ENCODE measurements at regions of chr5 and their contacts with region 1.

Region 1: GRCh38 chr5:44035617-44036016 is 353.6 kb downstream of the FGF10 start:
- DNase-seq: no peak
- ATAC-seq: no peak
- H3K4me3 ChIP-seq: no peak overlapping the region
- H3K27ac ChIP-seq: no peak overlapping the region
- H3K4me1 ChIP-seq: no peaks in the 10 kb centered on the region
- H3K27me3 ChIP-seq: no peaks in the 10 kb centered on the region
- CTCF ChIP-seq: no peak
- POLR2A ChIP-seq: no peak

Region 2: DNA sequence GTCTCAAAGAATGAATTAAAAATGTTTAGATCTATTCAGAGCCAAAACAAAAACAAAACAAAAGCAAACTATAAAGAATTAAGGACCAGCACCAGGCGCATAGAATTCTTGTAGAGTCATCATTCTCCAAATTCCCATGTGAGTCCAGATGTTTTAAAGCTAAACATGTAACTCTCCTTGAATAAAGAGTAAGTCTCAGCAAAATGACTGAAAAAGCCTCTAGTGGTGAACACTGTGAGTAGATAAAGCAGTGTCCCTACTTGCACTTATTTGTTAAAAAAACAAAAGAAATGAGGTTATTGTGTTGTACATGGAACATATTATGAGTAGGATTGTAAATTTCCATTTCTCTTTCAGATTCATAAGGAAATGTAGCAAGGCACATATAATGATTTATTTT is 388.6 kb before region 1 on chr5:
- in situ Hi-C with region 1: no loop called
- intact Hi-C with region 1: no loop called
- DNase-seq: no peak
- ATAC-seq: no peak
- H3K4me3 ChIP-seq: no peak overlapping the region
- H3K27ac ChIP-seq: peak overlapping the region in 2 of 4 donors; percentile 26 to 44
- H3K4me1 ChIP-seq: peaks cover 10 to 18% of the 10 kb centered on the region in 2 donors
- H3K27me3 ChIP-seq: no peaks in the 10 kb centered on the region
- CTCF ChIP-seq: no peak
- POLR2A ChIP-seq: no peak

Region 3: DNA sequence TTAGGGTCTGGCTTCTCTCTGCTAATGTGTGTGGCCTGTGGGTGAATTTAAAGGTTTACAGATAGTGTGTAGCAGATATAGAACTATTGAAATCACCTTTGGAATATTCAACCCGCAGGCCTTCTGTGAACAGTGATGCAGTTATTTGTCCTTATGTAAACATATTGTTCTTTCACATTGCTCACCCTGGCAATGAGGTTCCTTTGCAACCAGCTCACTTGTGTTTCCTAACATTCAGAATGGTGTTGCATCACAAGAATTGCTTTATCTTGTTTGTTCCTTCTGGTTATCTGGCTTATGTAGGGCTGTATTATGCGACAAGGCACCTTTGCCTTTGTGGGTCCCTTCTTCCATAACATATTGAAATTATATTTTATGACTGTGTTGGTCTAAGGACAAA is 62.3 kb before region 1 on chr5:
- in situ Hi-C with region 1: no loop called
- intact Hi-C with region 1: no loop called
- DNase-seq: no peak
- ATAC-seq: no peak
- H3K4me3 ChIP-seq: no peak overlapping the region
- H3K27ac ChIP-seq: no peak overlapping the region
- H3K4me1 ChIP-seq: no peaks in the 10 kb centered on the region
- H3K27me3 ChIP-seq: no peaks in the 10 kb centered on the region
- CTCF ChIP-seq: no peak
- POLR2A ChIP-seq: no peak

Region 4: DNA sequence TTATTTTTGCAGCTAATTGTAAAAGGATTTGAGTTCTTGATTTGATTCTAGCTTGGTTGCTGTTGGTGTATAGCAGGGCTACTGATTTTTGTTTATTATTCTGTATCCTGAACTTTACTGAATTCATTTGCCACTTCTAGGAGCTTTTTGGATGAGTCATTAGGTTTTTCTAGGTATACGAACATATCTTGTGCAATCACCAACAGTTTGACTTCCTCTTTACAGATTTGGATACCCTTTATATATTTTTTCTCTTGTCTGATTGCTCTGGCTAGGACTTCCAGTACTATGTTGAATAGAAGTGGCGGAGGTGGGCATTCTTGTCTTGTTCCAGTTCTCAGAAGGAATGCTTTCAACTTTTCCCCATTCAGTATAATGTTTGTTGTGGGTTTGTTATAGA is 142.8 kb after region 1 on chr5:
- in situ Hi-C with region 1: no loop called
- intact Hi-C with region 1: no loop called
- DNase-seq: no peak
- ATAC-seq: no peak
- H3K4me3 ChIP-seq: no peak overlapping the region
- H3K27ac ChIP-seq: no peak overlapping the region
- H3K4me1 ChIP-seq: no peaks in the 10 kb centered on the region
- H3K27me3 ChIP-seq: no peaks in the 10 kb centered on the region
- CTCF ChIP-seq: no peak
- POLR2A ChIP-seq: no peak

Region 5: GRCh38 chr5:44257653-44258365 is 222.2 kb after region 1 on chr5:
- in situ Hi-C with region 1: no loop called
- intact Hi-C with region 1: loop called (anchors 5 kb)
- DNase-seq: no peak
- ATAC-seq: no peak
- H3K4me3 ChIP-seq: no peak overlapping the region
- H3K27ac ChIP-seq: no peak overlapping the region
- H3K4me1 ChIP-seq: no peaks in the 10 kb centered on the region
- H3K27me3 ChIP-seq: no peaks in the 10 kb centered on the region
- CTCF ChIP-seq: no peak
- POLR2A ChIP-seq: no peak

Region 6: DNA sequence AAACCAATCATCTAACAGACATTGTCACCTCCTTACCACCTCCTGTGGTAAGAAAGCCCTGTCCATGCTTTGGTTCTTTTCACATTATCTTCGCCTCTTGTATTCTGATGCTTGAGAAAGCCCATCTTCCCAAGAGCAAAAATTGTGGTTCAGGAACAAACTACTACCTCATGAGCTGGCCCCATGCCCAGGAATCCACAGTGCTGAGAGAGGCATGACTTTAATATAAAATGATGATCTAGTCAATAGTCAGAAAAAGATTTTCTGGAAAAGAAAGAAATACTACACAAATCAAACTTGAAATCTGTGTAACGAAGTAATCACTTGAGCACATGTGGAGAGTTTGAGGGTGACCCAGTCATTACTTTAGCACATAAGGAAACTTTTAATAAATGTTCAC is 258.9 kb after region 1 on chr5:
- in situ Hi-C with region 1: no loop called
- intact Hi-C with region 1: no loop called
- DNase-seq: peak in 1 of 2 donors; percentile 15
- ATAC-seq: no peak
- H3K4me3 ChIP-seq: no peak overlapping the region
- H3K27ac ChIP-seq: no peak overlapping the region
- H3K4me1 ChIP-seq: no peaks in the 10 kb centered on the region
- H3K27me3 ChIP-seq: no peaks in the 10 kb centered on the region
- CTCF ChIP-seq: no peak
- POLR2A ChIP-seq: no peak